Panc1 (cell line): ENCODE measurements at regions of chr7 and their contacts with region 1.

Region 1: GRCh38 chr7:44259547-44260457 is 59.0 kb downstream of the YKT6 start:
- DNase-seq: no peak
- ATAC-seq: no peak; the same call in 1 of the 2 replicates
- H3K4me3 ChIP-seq: no peak overlapping the region
- H3K27ac ChIP-seq: no peak overlapping the region
- H3K4me1 ChIP-seq: no peaks in the 10 kb centered on the region
- H3K27me3 ChIP-seq: no peaks in the 10 kb centered on the region
- CTCF ChIP-seq: no peak

Region 2: GRCh38 chr7:44275957-44276410 is 16.2 kb after region 1 on chr7:
- CTCF ChIA-PET with region 1: interaction called, 17 read pairs
- POLR2A ChIA-PET with region 1: interaction called, 3 read pairs
- in situ Hi-C with region 1: no loop called
- intact Hi-C with region 1: no loop called
- DNase-seq: no peak
- ATAC-seq: no peak
- H3K4me3 ChIP-seq: no peak overlapping the region
- H3K27ac ChIP-seq: no peak overlapping the region
- H3K4me1 ChIP-seq: no peaks in the 10 kb centered on the region
- H3K27me3 ChIP-seq: no peaks in the 10 kb centered on the region
- CTCF ChIP-seq: no peak